ENCODE measurements at regions of chr12 and their contacts with region 1.

Region 1: GRCh38 chr12:69738351-69739286 is at the start of gene RAB3IP:
- DNase-seq: peak; percentile 84 to 95 (median 93)
- ATAC-seq: peak; percentile 87
- H3K4me3 ChIP-seq: peak within 1 kb of the TSS; percentile 64 to 79
- H3K4me3 Mint-ChIP-seq: peak within 1 kb of the TSS; percentile 82
- H3K27ac ChIP-seq: peak within 1 kb of the TSS; percentile 73
- H3K27ac Mint-ChIP-seq: peak within 1 kb of the TSS; percentile 69
- H3K4me1 ChIP-seq: peaks cover 11% of the 10 kb centered on the region
- H3K4me1 Mint-ChIP-seq: peaks cover 24% of the 10 kb centered on the region
- H3K27me3 ChIP-seq: no peaks in the 10 kb centered on the region
- H3K27me3 Mint-ChIP-seq: peaks cover 4% of the 10 kb centered on the region
- CTCF ChIP-seq: peak; percentile 89
- total RNA-seq, gene RAB3IP: 14.8 to 15.1 TPM

Region 2: DNA sequence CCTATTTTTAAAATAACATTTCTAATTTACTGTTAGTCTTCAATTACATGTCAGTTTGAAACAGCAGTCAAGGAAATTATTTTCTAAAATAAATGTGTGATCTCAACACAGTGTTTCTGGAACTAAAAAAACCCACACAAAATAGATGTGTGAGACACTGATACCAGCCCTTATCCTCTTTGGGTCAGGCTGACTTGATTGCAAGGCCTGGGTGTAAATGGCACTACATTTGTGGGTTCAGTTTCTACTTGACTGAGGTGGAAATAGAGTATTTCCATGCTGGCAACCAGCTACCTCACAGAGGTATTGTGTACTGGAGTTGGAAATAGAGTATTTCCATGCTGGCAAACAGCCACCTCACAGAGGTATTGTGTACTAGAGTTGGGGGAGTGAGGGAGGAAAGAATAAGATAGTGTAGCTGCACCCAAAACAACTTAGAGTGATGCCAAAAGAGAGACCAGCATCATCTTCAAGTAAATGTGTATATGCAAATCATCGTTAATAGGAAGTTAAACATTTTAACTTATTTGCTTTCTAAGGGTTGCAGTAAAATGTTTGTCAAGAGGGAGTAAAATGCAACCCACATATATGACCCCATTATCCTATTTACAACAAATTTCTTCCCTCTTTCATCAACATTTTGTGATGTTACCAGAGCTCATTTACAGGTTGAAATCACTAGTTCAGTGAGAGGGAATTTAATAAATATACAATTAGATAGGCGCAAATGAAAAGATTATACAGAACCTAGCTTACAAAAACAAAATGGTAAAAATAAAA is 401.1 kb before region 1 on chr12:
- CTCF ChIA-PET with region 1: no interaction called
- POLR2A ChIA-PET with region 1: no interaction called
- intact Hi-C with region 1: loop called in 1 of 2 experiments (anchors 2 kb)
- DNase-seq: no peak
- ATAC-seq: no peak
- H3K4me3 ChIP-seq: no peak overlapping the region
- H3K4me3 Mint-ChIP-seq: no peak overlapping the region
- H3K27ac ChIP-seq: no peak overlapping the region
- H3K27ac Mint-ChIP-seq: no peak overlapping the region
- H3K4me1 ChIP-seq: peaks cover 25% of the 10 kb centered on the region
- H3K4me1 Mint-ChIP-seq: peaks cover 23% of the 10 kb centered on the region
- H3K27me3 ChIP-seq: no peaks in the 10 kb centered on the region
- H3K27me3 Mint-ChIP-seq: peaks cover 2% of the 10 kb centered on the region
- CTCF ChIP-seq: no peak

Region 3: GRCh38 chr12:69470189-69471075 is 268.2 kb before region 1 on chr12 and contains the start of gene FRS2:
- CTCF ChIA-PET with region 1: no interaction called
- POLR2A ChIA-PET with region 1: no interaction called
- intact Hi-C with region 1: loop called (anchors 2 to 5 kb)
- DNase-seq: peak; percentile 66 to 91 (median 84)
- ATAC-seq: peak; percentile 97
- H3K4me3 ChIP-seq: peak within 1 kb of the TSS; percentile 86 to 88
- H3K4me3 Mint-ChIP-seq: peak within 1 kb of the TSS; percentile 98
- H3K27ac ChIP-seq: peak within 1 kb of the TSS; percentile 76 to 82
- H3K27ac Mint-ChIP-seq: peak within 1 kb of the TSS; percentile 97
- H3K4me1 ChIP-seq: peaks cover 30% of the 10 kb centered on the region
- H3K4me1 Mint-ChIP-seq: peaks cover 46% of the 10 kb centered on the region
- H3K27me3 ChIP-seq: no peaks in the 10 kb centered on the region
- H3K27me3 Mint-ChIP-seq: no peaks in the 10 kb centered on the region
- CTCF ChIP-seq: no peak
- total RNA-seq, gene FRS2: 31.1 to 32.4 TPM

Measured in CD8-positive, alpha-beta T cell (primary cell).